ENCODE measurements at regions of chr17 and their contacts with region 1.

Region 1: GRCh38 chr17:43846221-43846712 is 709 bp upstream of the CD300LG start:
- DNase-seq: peak; percentile 46
- H3K4me3 ChIP-seq: no peak overlapping the region
- H3K27ac ChIP-seq: no peak overlapping the region
- H3K4me1 ChIP-seq: peaks cover 18% of the 10 kb centered on the region
- H3K27me3 ChIP-seq: no peaks in the 10 kb centered on the region
- CTCF ChIP-seq: peak; percentile 97 to 100

Region 2: DNA sequence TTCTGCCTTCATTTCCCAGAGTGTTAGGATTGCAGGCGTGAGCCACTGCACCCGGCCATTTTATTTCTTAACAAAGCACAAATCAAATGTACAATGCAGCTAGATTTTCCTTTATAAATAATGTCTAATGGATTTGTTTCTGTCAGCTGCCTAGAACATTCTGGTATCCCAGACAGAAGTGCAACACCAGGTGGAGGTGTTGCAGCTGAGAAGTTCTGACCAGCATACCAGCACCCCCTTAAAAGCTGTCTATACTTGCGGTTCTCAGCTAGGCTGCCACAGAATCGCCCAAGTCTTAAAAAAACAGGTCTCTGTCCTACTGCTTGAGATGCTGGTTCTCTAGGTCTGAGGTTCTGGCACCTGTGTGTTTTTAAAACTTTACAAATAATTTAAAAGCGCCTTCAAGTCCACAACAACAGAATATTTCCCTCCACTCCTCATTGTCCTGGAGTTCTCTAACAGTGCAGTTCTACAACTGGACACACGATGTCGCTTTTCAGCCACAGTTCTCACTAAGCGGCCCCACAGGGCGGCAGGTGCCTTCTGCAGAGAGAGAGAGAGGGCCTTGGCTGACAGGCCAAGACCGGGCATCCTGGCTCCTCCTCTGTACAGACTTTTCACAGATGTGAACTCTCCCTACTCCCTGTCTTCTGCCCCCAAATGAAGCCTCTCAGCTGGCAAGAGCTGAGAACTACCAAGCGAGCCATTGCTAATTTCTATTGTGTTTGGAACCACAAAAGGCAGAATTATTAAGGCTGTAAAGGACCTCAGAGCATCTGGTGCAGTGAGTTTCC is 152.0 kb before region 1 on chr17:
- CTCF ChIA-PET with region 1: no interaction called
- dilution Hi-C with region 1: no loop called
- in situ Hi-C with region 1: no loop called
- intact Hi-C with region 1: loop called (anchors 10 kb)
- DNase-seq: peak; percentile 74
- H3K4me3 ChIP-seq: no peak overlapping the region
- H3K27ac ChIP-seq: no peak overlapping the region
- H3K4me1 ChIP-seq: no peaks in the 10 kb centered on the region
- H3K27me3 ChIP-seq: no peaks in the 10 kb centered on the region
- CTCF ChIP-seq: peak; percentile 89 to 97

Region 3: GRCh38 chr17:44758414-44759085 is 912.3 kb after region 1 on chr17 and contains the start of gene ADAM11:
- CTCF ChIA-PET with region 1: interaction called, 12 read pairs
- dilution Hi-C with region 1: no loop called
- in situ Hi-C with region 1: no loop called
- intact Hi-C with region 1: no loop called
- DNase-seq: no peak
- H3K4me3 ChIP-seq: peak within 1 kb of the TSS in 2 of 3 experiments; percentile 32 to 36
- H3K27ac ChIP-seq: no peak within 1 kb of the TSS
- H3K4me1 ChIP-seq: peaks cover 5% of the 10 kb centered on the region
- H3K27me3 ChIP-seq: peaks cover 16% of the 10 kb centered on the region
- CTCF ChIP-seq: no peak
- total RNA-seq, gene ADAM11: 0.17 to 0.33 TPM